ENCODE measurements at regions of chr11 and their contacts with region 1.

Region 1: DNA sequence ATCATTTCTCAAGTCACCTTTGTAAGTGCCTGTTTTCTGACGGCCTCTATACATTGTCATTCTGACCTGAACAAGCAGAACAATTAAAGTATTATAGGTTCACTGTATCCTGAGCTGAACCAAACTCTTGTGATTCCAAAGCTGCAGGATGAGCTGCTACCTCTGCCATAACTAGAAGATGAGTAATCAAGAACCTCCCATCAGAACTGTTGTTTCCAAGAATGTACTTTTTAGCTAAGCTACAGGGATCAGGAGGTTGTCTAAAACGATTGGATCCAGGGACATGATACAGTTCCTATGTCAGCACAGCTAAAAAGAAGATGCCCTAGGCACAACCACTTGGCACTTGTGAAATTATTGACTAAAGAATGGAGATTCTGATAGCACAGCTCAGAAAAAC is 288.3 kb upstream of the CCDC90B start:
- DNase-seq: no peak
- H3K4me3 ChIP-seq: no peak overlapping the region
- H3K27ac ChIP-seq: no peak overlapping the region
- H3K4me1 ChIP-seq: no peaks in the 10 kb centered on the region
- H3K27me3 ChIP-seq: no peaks in the 10 kb centered on the region
- CTCF ChIP-seq: no peak
- POLR2A ChIP-seq: no peak

Region 2: GRCh38 chr11:83477772-83478171 is 96.7 kb before region 1 on chr11:
- CTCF ChIA-PET with region 1: no interaction called
- POLR2A ChIA-PET with region 1: no interaction called
- dilution Hi-C with region 1: no loop called
- intact Hi-C with region 1: loop called (anchors 5 kb)
- DNase-seq: no peak
- H3K4me3 ChIP-seq: no peak overlapping the region
- H3K27ac ChIP-seq: no peak overlapping the region
- H3K4me1 ChIP-seq: no peaks in the 10 kb centered on the region
- H3K27me3 ChIP-seq: no peaks in the 10 kb centered on the region
- CTCF ChIP-seq: no peak
- POLR2A ChIP-seq: no peak